Activated CD4-positive, alpha-beta memory T cell treated with anti-CD3 and anti-CD28 coated beads, Interleukin-2, amount 10 ng/mL, durations not matched to agents 7 days and 5 days (primary cell): ENCODE measurements at regions of chr13 and their contacts with region 1.

Region 1: DNA sequence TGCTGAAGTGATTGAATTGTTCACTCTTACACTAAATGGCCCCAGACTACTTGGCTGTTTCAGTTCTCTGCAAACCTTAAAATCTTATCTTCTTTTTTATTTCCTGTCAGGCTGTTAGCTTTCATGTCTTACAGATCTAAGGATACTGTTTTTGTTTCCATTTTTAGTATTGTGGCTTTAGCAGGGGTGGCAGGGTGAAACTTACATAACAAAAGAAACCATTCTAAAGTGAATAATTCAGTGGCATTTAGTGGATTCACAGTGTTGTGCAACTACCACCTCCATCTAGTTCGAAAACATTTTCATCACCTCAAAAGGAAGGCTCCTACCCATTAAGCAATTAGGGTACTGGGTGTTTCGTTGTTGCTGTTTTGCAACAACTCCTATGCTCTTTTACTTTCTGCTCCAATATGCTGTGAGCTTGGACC is 19.8 kb downstream of the TMEM272 start:
- DNase-seq: no peak
- H3K4me3 Mint-ChIP-seq: peak overlapping the region; percentile 36
- H3K27ac Mint-ChIP-seq: peak overlapping the region; percentile 73
- H3K4me1 Mint-ChIP-seq: peaks cover 74% of the 10 kb centered on the region
- H3K27me3 Mint-ChIP-seq: no peaks in the 10 kb centered on the region

Region 2: DNA sequence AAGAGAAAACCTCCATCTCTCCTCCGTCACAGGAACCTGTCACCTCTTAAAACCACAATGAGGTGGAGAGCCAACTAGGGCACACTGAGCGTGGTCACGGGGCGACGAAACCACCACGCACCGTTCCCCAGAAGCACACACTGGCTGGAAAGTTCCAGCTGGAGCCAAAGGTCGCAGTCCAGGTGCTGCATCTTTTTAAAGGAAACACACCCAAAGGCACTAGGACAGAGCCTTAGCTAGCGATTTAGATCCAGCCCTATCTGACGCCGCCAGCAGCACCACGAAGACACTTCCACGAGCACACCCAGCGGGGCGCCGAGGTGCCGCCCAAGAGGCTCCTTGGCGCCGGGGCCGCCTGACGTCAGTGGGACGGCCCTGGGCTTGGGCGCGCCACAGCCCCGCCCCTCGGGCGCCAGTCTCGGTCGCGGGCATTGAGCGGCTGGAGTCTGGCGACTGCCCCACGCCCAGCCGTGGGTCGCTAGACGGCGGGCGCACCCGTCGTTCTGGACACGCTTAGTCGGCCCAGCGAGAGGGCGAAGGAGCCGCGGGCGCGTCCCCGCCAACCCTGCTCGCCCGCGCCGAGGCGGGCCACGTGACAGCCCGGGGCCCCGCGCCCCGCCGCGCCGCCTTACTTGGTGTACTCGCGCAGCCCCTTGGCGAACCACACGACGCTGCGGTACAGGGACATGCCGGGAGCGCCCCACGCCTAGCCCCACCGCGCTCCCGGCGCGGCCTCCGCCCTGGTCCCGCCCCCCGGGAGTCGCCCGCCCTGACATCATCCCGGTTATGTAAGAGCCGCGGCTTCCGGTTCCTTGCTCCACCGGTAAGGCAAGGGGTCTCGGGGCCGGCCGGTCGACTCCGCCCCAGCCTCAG is 21.5 kb before region 1 on chr13 and contains the start of gene DHRS12:
- CTCF ChIA-PET with region 1: interaction called, 6 read pairs
- POLR2A ChIA-PET with region 1: interaction called, 20 read pairs
- DNase-seq: peak; percentile 88
- H3K4me3 Mint-ChIP-seq: peak within 1 kb of the TSS; percentile 93
- H3K27ac Mint-ChIP-seq: peak within 1 kb of the TSS; percentile 99
- H3K4me1 Mint-ChIP-seq: peaks cover 36% of the 10 kb centered on the region
- H3K27me3 Mint-ChIP-seq: no peaks in the 10 kb centered on the region
- total RNA-seq, gene DHRS12: 5.0 to 6.4 TPM